Sciatic nerve (tissue), 2 donors: ENCODE measurements at regions of chr18 and their contacts with region 1.

Region 1: GRCh38 chr18:48781163-48781987 is 169.4 kb downstream of the SMAD7 start:
- DNase-seq: peak; percentile 91
- ATAC-seq: peak; percentile 71

Region 2: DNA sequence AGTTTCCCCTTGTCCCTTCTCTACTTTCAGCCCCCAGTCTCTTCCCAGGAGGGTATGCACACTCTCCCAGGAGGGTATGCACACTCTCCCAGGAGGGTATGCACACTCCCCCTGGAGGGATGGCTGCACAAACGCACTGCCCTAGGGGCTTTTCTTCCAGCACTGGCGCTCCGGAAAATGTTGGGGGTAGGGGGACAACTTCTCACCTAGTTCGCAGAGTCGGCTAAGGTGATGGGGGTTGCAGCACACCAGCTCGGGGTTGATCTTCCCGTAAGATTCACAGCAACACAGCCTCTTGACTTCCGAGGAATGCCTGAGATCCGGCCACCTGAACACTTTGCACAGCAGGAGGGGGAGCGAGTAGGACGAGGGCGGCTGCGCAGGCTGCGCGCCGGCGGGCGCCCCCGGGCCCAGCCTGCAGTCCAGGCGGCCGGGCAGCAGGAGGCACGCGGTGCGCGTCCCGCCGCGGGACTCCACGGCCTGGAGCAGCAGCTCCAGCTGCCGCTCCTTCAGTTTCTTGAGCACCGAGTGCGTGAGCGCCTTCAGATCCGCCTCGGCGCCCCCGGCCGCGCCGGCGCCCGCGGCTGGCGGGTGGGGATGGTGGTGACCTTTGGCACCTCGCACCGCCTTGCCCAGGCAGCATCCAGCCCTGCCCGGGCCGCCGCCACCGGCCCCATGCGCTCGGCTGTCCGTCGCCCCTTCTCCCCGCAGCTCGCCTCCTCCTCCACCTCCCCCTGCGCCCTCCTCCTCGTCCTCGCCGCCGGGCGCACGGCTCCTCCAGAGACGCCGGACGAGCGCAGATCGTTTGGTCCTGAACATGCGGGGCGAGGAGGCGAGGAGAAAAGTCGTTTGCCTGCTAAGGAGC is 168.5 kb after region 1 on chr18:
- intact Hi-C with region 1: loop called (anchors 10 kb)
- DNase-seq: no peak
- ATAC-seq: no peak